OCI-LY7 (cell line): ENCODE measurements at regions of chr13 and their contacts with region 1.

Region 1: DNA sequence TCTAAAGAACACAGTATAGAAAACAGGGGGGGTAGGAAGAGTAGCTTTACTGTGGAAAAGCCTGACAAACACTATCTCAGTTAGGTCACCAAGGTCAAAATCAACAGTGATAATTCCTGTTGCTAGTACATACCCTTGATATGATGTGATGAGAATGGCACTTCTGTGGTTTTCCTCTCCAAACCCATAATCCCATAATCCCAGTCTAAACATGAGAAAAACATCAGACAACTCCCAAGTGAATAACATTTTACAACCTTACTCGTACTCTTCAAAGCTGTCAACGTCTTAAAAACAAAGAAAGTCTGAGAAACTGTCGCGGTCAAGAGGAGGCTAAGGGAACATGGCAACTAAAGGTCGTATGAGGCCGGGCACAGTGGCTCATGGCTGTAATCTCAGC is 137.6 kb downstream of the FOXO1 start:
- DNase-seq: no peak
- H3K4me3 ChIP-seq: no peak overlapping the region
- H3K27ac ChIP-seq: no peak overlapping the region
- H3K4me1 ChIP-seq: peaks cover 53% of the 10 kb centered on the region
- CTCF ChIP-seq: no peak

Region 2: GRCh38 chr13:40514802-40515201 is 14.1 kb before region 1 on chr13:
- CTCF ChIA-PET with region 1: no interaction called
- POLR2A ChIA-PET with region 1: interaction called, 11 read pairs
- intact Hi-C with region 1: no loop called
- DNase-seq: no peak
- H3K4me3 ChIP-seq: no peak overlapping the region
- H3K27ac ChIP-seq: no peak overlapping the region
- H3K4me1 ChIP-seq: peaks cover 42% of the 10 kb centered on the region
- CTCF ChIP-seq: no peak

Region 3: DNA sequence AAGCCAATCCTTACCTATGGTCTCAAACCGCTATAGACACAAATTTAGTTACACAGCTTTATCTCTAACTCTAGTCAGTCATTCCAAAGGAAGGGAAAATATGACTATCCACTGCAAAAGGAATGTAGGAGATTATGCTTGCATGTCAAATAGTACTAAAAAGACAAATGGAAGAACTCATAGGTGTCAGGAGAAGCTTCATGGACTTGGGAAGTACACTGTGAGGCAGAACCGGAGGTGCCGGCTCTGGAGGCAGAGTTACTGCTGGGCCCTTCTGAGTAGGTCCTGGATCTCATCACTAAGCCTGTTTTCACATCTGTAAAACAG is 40.1 kb after region 1 on chr13:
- CTCF ChIA-PET with region 1: no interaction called
- POLR2A ChIA-PET with region 1: no interaction called
- intact Hi-C with region 1: no loop called
- DNase-seq: no peak
- H3K4me3 ChIP-seq: no peak overlapping the region
- H3K27ac ChIP-seq: peak overlapping the region; percentile 0
- H3K4me1 ChIP-seq: peaks cover 90% of the 10 kb centered on the region
- CTCF ChIP-seq: no peak

Region 4: DNA sequence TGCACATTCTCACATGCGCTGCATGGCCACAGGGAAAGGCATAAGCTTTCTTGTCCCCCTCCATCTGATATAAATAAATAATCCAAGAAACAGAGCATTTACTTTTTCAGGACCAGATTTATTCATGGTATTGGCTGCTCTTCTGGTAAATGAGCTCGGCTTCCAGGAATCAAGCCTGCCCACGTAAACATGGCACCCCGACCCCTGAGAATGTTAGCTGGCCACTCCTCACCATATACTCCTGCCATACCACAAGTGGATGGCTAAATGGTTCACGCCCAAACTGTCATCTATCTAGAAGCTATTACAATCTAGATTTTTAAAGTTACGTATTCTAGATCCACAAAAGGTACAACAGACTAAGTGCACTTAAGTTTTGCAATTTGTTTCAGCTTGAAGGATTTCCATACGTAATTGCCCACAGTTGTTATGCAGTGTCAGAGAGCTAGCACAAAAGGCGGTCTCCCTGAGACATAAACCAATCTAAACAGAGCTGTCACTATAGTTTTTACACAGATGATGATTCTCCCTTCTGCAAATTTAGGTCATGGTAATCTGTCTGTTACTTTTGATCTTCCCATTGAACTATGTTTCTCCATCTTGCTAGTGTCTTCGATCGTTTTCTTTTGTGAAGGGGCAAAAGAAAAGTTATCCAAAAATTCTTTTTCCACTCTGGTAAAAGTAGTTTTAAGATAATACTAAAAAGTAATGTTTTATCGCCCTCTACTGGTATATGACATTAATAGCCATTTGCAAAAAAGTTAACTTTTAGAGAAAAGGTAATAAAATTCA is 153.8 kb after region 1 on chr13:
- CTCF ChIA-PET with region 1: no interaction called
- POLR2A ChIA-PET with region 1: no interaction called
- intact Hi-C with region 1: no loop called
- DNase-seq: peak; percentile 86
- H3K4me3 ChIP-seq: peak overlapping the region; percentile 11
- H3K27ac ChIP-seq: peak overlapping the region; percentile 41
- H3K4me1 ChIP-seq: peaks cover 39% of the 10 kb centered on the region
- CTCF ChIP-seq: peak; percentile 88

Region 5: DNA sequence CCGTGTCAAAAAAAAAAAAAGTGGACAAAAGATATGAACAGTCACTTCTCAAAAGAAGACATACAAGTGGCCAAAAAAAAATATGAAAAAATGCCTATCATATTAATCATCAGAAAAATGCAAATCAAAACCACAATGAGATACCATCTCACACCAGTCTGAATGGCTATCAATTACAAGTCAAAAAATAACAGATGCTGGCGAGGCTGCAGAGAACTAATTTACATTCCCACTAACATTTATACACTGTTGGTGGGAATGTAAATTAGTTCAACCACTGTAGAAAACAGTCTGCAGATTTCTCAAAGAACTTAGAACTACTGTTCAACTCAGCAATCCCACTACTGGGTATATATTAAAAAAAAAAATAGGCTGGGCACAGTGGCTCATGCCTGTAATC is 164.1 kb after region 1 on chr13:
- CTCF ChIA-PET with region 1: no interaction called
- POLR2A ChIA-PET with region 1: no interaction called
- intact Hi-C with region 1: no loop called
- DNase-seq: no peak
- H3K4me3 ChIP-seq: no peak overlapping the region
- H3K27ac ChIP-seq: peak overlapping the region; percentile 64
- H3K4me1 ChIP-seq: peaks cover 66% of the 10 kb centered on the region
- CTCF ChIP-seq: no peak